Caco-2 (cell line): ENCODE measurements at regions of chr11 and their contacts with region 1.

Region 1: DNA sequence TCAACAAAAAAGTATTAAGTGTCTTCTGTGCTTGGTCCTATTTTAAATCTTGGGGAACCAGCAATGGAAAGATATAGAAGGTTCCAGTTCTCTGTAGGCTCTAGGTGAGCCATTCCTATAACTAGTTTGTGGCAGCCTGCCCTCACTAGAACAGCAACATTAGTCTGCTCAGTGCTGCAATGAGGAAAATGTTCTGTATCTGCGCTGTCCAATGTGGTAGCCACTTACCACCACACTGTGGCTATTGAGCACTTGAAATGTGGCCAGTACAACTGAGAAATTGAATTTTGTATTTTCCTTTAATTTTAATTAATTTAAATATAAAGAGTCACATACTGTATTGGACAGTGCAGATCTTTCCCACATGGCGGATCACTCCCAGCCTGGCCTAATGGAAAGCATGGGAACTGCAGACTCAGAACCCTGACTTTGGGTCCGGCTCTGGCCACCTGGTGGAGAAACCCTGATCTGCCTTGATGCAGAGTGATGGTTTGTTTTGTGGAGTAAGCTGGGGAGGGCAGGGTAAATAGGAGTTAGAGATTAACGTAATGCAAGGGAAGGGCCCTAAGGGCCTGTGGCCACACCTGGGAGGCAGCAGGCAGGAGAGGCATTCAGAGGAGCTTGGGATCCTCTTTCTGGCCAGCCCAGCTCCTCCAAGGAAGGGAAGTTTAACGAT is 101.0 kb downstream of the ME3 start:
- DNase-seq: peak; percentile 93
- H3K4me3 ChIP-seq: no peak overlapping the region
- H3K4me3 Mint-ChIP-seq: peak overlapping the region; percentile 6
- H3K27ac Mint-ChIP-seq: peak overlapping the region; percentile 2
- H3K4me1 ChIP-seq: peaks cover 32% of the 10 kb centered on the region
- H3K4me1 Mint-ChIP-seq: peaks cover 37% of the 10 kb centered on the region
- H3K27me3 ChIP-seq: no peaks in the 10 kb centered on the region
- H3K27me3 Mint-ChIP-seq: no peaks in the 10 kb centered on the region
- CTCF ChIP-seq: peak; percentile 95 to 96

Region 2: GRCh38 chr11:86228269-86229220 is 342.9 kb before region 1 on chr11:
- CTCF ChIA-PET with region 1: no interaction called
- POLR2A ChIA-PET with region 1: no interaction called
- intact Hi-C with region 1: no loop called
- DNase-seq: peak in 1 of 2 experiments; percentile 47
- H3K4me3 ChIP-seq: no peak overlapping the region
- H3K4me3 Mint-ChIP-seq: no peak overlapping the region
- H3K27ac Mint-ChIP-seq: no peak overlapping the region
- H3K4me1 ChIP-seq: peaks cover 13% of the 10 kb centered on the region
- H3K4me1 Mint-ChIP-seq: peaks cover 17% of the 10 kb centered on the region
- H3K27me3 ChIP-seq: no peaks in the 10 kb centered on the region
- H3K27me3 Mint-ChIP-seq: no peaks in the 10 kb centered on the region
- CTCF ChIP-seq: no peak

Region 3: DNA sequence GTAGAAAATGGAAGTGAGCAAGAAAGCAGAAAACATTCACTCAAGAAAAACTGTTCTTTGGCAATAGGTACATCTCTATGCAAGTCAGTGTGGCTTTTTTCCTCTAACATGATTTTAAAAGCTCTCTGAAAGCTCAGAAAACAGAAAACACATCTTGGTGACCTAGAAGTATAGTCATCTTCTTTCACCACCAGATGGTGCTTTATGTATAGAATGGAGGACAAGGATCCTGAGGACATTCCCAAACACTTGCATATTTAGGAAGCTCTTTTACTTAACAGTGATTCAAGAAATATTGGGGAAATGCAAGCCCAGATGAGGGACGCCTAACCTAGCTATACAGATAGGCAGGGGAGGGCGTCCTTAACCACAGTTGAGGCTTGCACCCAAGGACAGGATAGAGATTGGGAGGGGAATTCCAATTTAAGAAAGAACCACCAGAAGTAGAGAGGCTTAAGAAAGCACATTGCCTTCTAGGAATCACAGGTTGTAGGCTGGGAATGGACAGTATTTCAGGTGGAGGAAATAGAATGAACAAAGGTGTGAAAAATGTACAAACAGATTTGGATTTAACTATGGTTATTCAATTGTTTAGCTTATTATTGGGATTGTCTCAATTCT is 210.5 kb before region 1 on chr11:
- CTCF ChIA-PET with region 1: interaction called, 5 read pairs
- POLR2A ChIA-PET with region 1: no interaction called
- intact Hi-C with region 1: loop called (anchors 5 kb)
- DNase-seq: peak in 1 of 2 experiments; percentile 47
- H3K4me3 ChIP-seq: no peak overlapping the region
- H3K4me3 Mint-ChIP-seq: no peak overlapping the region
- H3K27ac Mint-ChIP-seq: no peak overlapping the region
- H3K4me1 ChIP-seq: no peaks in the 10 kb centered on the region
- H3K4me1 Mint-ChIP-seq: no peaks in the 10 kb centered on the region
- H3K27me3 ChIP-seq: no peaks in the 10 kb centered on the region
- H3K27me3 Mint-ChIP-seq: no peaks in the 10 kb centered on the region
- CTCF ChIP-seq: peak; percentile 71 to 78

Region 4: DNA sequence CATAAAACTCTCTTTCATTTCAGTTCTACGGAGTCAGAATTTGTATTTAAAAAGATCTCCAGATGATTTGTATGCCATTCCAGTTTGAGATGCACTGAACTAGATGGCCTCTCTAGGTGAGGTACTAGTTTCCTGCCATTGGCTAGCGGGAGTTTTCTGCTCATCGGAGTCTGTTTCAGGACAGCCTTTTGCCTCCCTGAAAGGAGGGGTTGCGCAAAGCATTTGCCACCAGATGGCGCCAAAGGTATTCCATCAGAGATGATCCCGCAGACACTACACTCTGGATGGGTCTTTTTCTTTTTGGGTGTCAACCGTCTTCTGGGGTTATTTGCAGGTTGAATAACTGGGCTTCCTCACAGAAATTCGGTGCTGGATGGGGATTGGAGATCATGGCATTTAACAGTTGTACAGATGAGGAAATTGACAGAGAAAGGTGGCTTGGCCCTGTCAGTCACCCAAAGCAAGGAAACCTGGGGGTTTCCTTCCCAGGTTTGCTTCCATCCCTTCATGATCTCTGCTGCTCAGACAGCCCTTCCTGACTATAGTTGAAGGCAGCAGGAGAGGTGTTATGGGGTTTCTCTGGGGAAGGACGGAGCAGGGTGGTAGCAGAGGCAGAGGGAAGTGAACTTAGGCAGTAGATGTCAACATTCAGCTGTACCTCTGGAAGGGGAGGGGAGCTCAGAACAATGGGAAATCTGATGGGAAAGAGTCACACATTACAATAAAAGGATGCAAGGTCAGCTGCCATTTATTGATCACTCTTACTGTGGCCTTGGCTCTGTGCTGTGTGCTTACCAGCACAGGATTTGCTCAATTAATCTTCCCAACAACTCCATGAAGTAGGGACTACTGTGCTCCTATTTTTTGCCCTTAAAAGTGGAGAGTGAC is 115.1 kb before region 1 on chr11:
- CTCF ChIA-PET with region 1: interaction called, 22 read pairs
- POLR2A ChIA-PET with region 1: no interaction called
- intact Hi-C with region 1: loop called (anchors 1 kb)
- DNase-seq: peak; percentile 91 to 93
- H3K4me3 ChIP-seq: no peak overlapping the region
- H3K4me3 Mint-ChIP-seq: no peak overlapping the region
- H3K27ac Mint-ChIP-seq: peak overlapping the region; percentile 65
- H3K4me1 ChIP-seq: peaks cover 29% of the 10 kb centered on the region
- H3K4me1 Mint-ChIP-seq: peaks cover 41% of the 10 kb centered on the region
- H3K27me3 ChIP-seq: no peaks in the 10 kb centered on the region
- H3K27me3 Mint-ChIP-seq: no peaks in the 10 kb centered on the region
- CTCF ChIP-seq: peak; percentile 98

Region 5: GRCh38 chr11:86469491-86470393 is 101.7 kb before region 1 on chr11:
- CTCF ChIA-PET with region 1: interaction called, 4 read pairs
- POLR2A ChIA-PET with region 1: no interaction called
- intact Hi-C with region 1: loop called (anchors 1 kb)
- DNase-seq: peak; percentile 89 to 91
- H3K4me3 ChIP-seq: no peak overlapping the region
- H3K4me3 Mint-ChIP-seq: peak overlapping the region; percentile 36
- H3K27ac Mint-ChIP-seq: peak overlapping the region; percentile 70
- H3K4me1 ChIP-seq: peaks cover 44% of the 10 kb centered on the region
- H3K4me1 Mint-ChIP-seq: peaks cover 58% of the 10 kb centered on the region
- H3K27me3 ChIP-seq: no peaks in the 10 kb centered on the region
- H3K27me3 Mint-ChIP-seq: no peaks in the 10 kb centered on the region
- CTCF ChIP-seq: no peak

Region 6: GRCh38 chr11:86483940-86484794 is 87.2 kb before region 1 on chr11:
- CTCF ChIA-PET with region 1: interaction called, 12 read pairs
- POLR2A ChIA-PET with region 1: no interaction called
- intact Hi-C with region 1: loop called (anchors 1 kb)
- DNase-seq: peak; percentile 90 to 93
- H3K4me3 ChIP-seq: no peak overlapping the region
- H3K4me3 Mint-ChIP-seq: peak overlapping the region; percentile 1
- H3K27ac Mint-ChIP-seq: peak overlapping the region; percentile 77
- H3K4me1 ChIP-seq: peaks cover 54% of the 10 kb centered on the region
- H3K4me1 Mint-ChIP-seq: peaks cover 57% of the 10 kb centered on the region
- H3K27me3 ChIP-seq: no peaks in the 10 kb centered on the region
- H3K27me3 Mint-ChIP-seq: no peaks in the 10 kb centered on the region
- CTCF ChIP-seq: no peak

Region 7: DNA sequence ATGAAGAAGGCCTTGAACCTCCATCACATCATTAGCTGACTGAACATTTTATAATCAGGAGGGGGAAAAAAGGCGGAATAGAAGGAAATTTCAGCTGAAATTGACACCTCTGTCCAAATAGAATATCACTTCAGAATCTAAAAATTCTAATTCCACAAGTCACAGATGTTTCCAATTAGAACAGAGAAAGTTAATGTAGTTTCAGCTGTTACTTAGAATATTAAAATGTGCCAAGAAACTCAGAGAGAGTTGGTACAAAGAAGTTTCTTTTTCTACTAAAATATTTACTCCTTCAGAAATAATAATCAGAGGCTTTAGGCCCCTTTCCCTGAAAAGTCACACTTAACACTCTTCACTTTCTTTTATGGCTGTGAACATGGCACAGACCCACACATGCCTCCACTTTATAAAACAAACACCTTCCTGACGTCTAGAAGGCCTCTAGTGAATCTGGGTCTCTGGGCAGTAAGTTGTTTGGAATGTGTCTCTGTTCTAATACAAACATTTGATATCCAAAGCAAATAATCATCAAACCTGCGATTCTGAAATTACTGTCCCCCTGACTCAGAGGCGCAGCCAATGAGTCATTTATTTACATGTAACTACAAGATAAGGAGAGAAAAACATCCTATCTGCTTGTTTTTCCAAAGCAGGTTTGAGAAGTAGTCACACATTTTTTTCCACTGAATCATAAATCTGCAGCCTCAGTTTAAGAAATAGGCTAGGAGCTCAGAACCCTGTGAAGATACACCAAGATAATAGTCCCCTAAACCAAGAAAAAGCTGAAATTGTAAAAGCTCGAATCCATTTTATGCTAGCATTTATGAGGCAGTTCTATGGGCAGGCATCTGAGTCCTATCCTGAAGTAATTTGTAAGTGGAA is 47.4 kb before region 1 on chr11:
- CTCF ChIA-PET with region 1: interaction called, 9 read pairs
- POLR2A ChIA-PET with region 1: no interaction called
- intact Hi-C with region 1: loop called (anchors 1 kb)
- DNase-seq: peak; percentile 89 to 91
- H3K4me3 ChIP-seq: no peak overlapping the region
- H3K4me3 Mint-ChIP-seq: peak overlapping the region; percentile 38
- H3K27ac Mint-ChIP-seq: peak overlapping the region; percentile 88
- H3K4me1 ChIP-seq: peaks cover 57% of the 10 kb centered on the region
- H3K4me1 Mint-ChIP-seq: peaks cover 45% of the 10 kb centered on the region
- H3K27me3 ChIP-seq: no peaks in the 10 kb centered on the region
- H3K27me3 Mint-ChIP-seq: no peaks in the 10 kb centered on the region
- CTCF ChIP-seq: no peak

Region 8: DNA sequence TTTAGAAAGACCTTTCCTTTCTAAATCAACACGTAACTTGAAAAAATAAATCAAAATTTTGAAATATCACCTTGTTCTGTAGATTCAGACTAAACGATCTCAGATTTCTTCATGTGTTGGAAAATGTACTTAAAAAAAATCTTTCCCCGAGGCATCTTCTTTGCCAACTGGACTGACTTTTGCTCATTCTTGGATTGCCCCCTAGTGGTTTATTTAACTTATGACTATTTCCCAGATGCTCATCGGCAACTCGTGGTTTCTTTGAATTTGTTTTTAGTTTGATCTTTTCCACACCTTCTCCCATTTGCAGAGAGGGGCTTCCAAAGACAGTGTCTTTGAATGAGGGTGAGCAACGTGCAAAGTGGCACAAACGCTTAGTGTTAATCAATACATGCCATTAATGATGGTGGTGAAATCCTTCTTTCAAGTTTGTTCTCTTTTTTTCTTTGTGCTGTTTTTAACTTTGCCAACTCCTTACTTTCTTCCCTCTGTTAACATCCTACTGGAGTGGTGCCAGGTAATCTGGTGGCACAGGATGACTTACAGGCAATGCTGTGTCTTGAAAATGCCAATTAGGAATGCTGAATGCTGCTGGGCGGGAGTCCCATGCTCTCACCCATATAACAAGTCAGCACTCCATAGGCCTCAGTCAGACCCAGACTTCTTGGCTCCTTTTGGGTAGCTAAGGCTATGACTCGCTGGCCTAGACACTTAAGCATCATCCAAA is 247.2 kb after region 1 on chr11:
- CTCF ChIA-PET with region 1: no interaction called
- POLR2A ChIA-PET with region 1: no interaction called
- intact Hi-C with region 1: loop called (anchors 1 kb)
- DNase-seq: peak in 1 of 2 experiments; percentile 74
- H3K4me3 ChIP-seq: no peak overlapping the region
- H3K4me3 Mint-ChIP-seq: no peak overlapping the region
- H3K27ac Mint-ChIP-seq: peak overlapping the region; percentile 23
- H3K4me1 ChIP-seq: peaks cover 52% of the 10 kb centered on the region
- H3K4me1 Mint-ChIP-seq: peaks cover 41% of the 10 kb centered on the region
- H3K27me3 ChIP-seq: no peaks in the 10 kb centered on the region
- H3K27me3 Mint-ChIP-seq: no peaks in the 10 kb centered on the region
- CTCF ChIP-seq: peak; percentile 83 to 95